ENCODE measurements at regions of chr7 and their contacts with region 1.

Region 1: DNA sequence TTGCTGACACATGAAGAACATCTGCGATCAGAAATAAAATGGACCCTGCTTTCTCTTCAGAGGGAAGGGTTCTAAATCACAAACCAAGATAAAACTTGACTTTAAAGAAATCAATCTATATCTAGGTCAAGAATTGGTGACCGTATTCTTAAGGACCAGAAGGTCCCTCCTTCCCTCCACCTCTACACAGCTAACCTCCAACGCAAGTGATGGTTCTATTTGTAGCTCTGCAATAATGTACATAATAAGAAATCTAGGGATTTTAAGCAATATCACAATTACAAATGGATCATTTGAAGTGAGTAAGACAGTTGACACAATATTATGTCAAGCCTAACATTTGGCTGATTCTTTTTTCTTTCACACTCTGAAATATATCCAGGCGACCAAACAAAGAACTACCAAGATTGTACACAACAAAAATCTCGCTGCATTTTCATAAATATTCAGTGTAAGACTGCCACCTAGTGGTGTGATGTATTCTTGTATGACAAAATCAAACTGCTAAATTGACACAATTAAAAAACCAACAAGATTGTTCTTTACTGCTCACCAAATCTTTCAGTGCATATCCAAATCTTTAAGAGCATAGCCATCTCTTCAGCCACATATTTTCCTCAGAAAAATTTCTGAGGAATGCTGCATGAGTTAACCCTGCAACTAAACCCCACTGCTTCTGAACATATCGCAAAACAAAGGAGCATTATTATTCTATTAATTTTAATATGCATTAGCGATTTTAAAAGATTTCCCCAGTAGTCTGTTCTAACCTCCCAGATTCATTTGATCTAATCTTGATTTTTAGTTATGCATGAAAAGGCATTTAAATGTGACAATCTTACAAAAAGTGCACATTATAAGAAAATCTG is 44.5 kb downstream of the ICA1 start:
- DNase-seq: peak; percentile 36
- CTCF ChIP-seq: peak; percentile 33

Region 2: DNA sequence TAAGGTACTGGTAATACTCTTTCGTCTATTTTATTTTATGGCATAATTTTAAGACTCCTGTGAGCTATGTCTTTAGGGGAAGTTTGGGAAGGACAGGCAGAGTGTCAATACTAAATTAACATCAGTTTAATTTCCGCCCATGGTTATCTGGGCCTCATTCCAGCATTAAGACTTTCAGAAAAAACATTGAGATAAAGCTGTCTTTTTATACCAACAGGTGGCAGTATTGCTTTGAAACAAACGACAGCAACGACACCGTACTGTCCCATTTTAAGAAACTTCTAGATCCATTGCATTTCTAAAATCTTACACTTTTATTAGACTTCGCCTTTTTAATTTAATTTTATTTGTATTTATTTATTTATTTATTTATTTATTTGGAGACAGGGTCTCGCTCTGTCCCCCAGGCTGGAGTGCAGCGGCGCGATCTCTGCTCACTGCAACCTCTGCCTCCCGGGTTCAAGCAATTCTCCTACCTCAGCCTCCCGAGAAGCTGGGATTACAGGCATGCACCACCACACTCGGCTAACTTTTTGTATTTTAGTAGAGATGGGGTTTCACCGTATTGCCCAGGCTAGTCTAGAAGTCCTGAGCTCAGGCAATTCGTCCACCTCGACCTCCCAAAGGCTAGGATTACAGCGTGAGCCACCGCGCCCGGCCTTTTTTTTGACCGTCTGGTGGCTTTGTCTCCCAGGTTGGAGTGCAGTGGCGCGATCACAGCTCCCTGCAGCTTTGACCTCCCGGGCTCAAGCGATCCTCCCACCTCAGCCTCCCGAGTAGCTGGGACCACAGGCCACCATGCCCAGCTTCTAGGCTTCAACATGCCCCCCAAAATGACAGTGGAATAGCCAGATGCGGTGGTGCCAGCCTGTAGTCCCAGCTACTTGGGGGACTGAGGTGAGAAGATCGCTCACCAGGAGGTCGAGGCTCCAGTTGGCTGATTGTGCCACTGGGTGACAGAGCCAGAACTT is 1113.8 kb before region 1 on chr7:
- in situ Hi-C with region 1: loop called (anchors 25 kb)
- DNase-seq: peak; percentile 76
- CTCF ChIP-seq: peak; percentile 39

Region 3: DNA sequence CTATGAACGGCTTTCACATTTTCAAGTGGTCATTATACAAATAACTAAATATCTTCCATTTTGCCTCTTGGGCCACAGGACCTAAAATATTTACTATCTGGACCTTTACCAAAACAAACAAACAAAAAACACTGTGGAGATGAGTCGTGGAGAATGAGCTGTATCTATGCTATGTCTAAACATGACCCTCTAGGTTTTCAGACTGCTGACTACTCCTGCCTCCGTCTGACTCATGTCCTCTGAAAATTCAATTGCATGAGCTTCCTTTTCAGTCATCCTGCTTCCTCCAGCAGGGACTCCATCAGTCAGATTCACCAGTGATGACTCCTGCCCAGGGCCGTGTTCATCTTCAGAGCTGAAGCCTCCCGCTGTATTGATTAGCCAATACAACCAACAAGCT is 778.6 kb before region 1 on chr7:
- in situ Hi-C with region 1: loop called (anchors 25 kb)
- DNase-seq: no peak
- CTCF ChIP-seq: no peak

Region 4: GRCh38 chr7:7653593-7654187 is 563.7 kb before region 1 on chr7:
- in situ Hi-C with region 1: loop called (anchors 25 kb)
- DNase-seq: no peak
- CTCF ChIP-seq: peak; percentile 23

Region 5: DNA sequence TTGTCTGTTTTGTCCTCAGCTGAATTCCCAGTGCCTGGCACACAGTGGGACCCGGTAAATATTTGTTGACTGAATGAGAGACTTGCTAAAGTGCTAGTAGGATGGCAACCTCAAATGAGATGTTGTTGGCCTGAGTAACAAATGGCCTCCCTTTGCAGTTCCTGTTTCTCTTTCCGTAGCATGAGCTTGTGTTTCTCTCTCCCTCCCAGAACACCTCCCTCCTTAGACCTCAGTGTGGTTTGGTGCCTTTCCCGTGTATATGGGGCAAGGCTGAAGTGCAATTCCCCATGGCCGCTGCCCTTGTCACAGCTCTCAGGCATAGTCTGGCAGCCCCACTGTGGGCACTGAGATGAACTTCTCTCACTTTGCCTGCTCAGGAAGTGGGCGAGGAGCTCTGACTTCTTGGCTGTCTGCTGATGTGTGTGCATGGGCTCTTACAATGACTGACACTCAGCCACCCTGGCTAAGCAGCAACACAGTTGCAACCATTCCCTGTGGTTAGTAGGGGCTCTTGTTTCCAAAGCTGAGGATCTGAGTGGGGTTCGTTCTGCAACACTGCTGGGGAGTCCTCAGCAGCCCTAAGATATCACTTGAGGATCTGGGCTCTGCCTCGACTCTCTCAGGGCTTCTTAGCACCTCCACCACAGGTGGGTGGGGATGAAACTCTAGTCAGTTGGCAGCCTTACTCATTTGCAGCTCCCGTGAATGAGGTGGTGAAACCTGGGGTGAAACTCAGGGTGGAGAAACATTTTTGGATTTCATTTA is 91.6 kb before region 1 on chr7:
- in situ Hi-C with region 1: no loop called
- DNase-seq: peak; percentile 66
- CTCF ChIP-seq: no peak